ENCODE measurements at regions of chr2 and their contacts with region 1.

Region 1: GRCh38 chr2:236180831-236181453 is 12.8 kb upstream of the GBX2 start:
- DNase-seq: peak; percentile 86

Region 2: DNA sequence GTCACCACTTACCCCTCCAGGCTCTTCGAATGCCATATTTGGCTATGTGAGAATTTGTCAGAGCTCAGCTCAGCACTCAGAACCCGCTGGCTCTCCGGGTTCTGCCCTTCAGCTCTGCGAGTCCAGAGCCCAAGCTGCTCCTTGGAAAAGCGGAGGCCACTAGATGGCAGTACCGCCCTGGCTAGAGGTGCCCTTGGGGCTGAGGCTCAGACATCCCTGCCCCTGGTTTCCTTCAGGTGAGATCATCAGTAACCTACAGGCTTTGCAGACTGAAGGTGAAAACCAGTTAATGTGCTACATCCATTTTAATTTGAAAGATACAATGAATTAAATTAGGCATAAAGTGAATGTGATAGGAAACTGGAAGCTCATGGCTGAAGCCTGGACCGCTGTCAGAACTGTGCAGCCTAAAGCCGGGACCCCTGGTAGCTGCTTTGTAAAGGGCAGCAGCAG is 401.5 kb before region 1 on chr2:
- in situ Hi-C with region 1: loop called (anchors 10 kb)
- DNase-seq: peak; percentile 59

Measured in KBM-7 (cell line).